Natural killer cell (primary cell): ENCODE measurements at regions of chr1 and their contacts with region 1.

Region 1: GRCh38 chr1:113677250-113678158 is 81.8 kb downstream of the PHTF1 start:
- DNase-seq: peak in 1 of 2 donors; percentile 60
- ATAC-seq: peak in 2 of 3 donors; percentile 36 to 57
- H3K4me3 ChIP-seq: no peak overlapping the region
- H3K4me3 Mint-ChIP-seq: no peak overlapping the region
- H3K27ac ChIP-seq: no peak overlapping the region
- H3K27ac Mint-ChIP-seq: no peak overlapping the region
- H3K4me1 ChIP-seq: no peaks in the 10 kb centered on the region
- H3K4me1 Mint-ChIP-seq: no peaks in the 10 kb centered on the region
- H3K27me3 ChIP-seq: no peaks in the 10 kb centered on the region
- H3K27me3 Mint-ChIP-seq: peaks cover 4 to 16% of the 10 kb centered on the region in 2 donors
- CTCF ChIP-seq: peak; percentile 58

Region 2: DNA sequence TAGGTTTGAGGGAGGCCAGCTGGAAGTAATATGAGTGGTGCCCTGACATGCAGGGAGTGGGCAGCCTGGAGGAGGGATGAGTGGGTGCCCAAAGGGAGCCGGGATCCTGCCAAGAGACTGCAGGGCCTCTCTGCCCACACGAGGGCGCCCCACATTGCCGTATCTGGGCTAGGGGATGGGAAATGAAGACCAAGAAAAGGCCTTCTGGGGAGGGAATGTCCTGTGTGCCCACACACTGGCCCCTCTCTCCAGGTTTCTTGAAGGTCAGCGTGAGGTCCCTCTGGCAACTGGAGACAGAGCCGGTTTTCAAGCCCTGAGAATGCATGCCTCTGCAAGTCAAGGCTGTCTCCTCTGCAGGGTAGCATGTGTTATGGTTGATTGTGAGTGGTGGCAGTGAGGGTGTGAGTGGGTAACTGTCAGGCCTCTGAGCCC is 868.2 kb before region 1 on chr1:
- intact Hi-C with region 1: loop called (anchors 5 kb)
- DNase-seq: peak; percentile 58 to 63
- ATAC-seq: peak; percentile 64 to 92 (median 79)
- H3K4me3 ChIP-seq: no peak overlapping the region
- H3K4me3 Mint-ChIP-seq: no peak overlapping the region
- H3K27ac ChIP-seq: no peak overlapping the region
- H3K27ac Mint-ChIP-seq: no peak overlapping the region
- H3K4me1 ChIP-seq: no peaks in the 10 kb centered on the region
- H3K4me1 Mint-ChIP-seq: peaks cover 0 to 6% of the 10 kb centered on the region in 2 donors
- H3K27me3 ChIP-seq: no peaks in the 10 kb centered on the region
- H3K27me3 Mint-ChIP-seq: peaks cover 7 to 26% of the 10 kb centered on the region in 2 donors
- CTCF ChIP-seq: peak; percentile 79

Region 3: GRCh38 chr1:113140588-113141446 is 536.7 kb before region 1 on chr1:
- intact Hi-C with region 1: loop called (anchors 2 kb)
- DNase-seq: peak in 1 of 2 donors; percentile 76
- ATAC-seq: peak; percentile 70 to 85 (median 75)
- H3K4me3 ChIP-seq: no peak overlapping the region
- H3K4me3 Mint-ChIP-seq: no peak overlapping the region
- H3K27ac ChIP-seq: no peak overlapping the region
- H3K27ac Mint-ChIP-seq: no peak overlapping the region
- H3K4me1 ChIP-seq: no peaks in the 10 kb centered on the region
- H3K4me1 Mint-ChIP-seq: peaks cover 0 to 9% of the 10 kb centered on the region in 2 donors
- H3K27me3 ChIP-seq: no peaks in the 10 kb centered on the region
- H3K27me3 Mint-ChIP-seq: no peaks in the 10 kb centered on the region
- CTCF ChIP-seq: peak; percentile 66